Tibial artery (tissue), 4 donors: ENCODE measurements at regions of chr1 and their contacts with region 1.

Region 1: DNA sequence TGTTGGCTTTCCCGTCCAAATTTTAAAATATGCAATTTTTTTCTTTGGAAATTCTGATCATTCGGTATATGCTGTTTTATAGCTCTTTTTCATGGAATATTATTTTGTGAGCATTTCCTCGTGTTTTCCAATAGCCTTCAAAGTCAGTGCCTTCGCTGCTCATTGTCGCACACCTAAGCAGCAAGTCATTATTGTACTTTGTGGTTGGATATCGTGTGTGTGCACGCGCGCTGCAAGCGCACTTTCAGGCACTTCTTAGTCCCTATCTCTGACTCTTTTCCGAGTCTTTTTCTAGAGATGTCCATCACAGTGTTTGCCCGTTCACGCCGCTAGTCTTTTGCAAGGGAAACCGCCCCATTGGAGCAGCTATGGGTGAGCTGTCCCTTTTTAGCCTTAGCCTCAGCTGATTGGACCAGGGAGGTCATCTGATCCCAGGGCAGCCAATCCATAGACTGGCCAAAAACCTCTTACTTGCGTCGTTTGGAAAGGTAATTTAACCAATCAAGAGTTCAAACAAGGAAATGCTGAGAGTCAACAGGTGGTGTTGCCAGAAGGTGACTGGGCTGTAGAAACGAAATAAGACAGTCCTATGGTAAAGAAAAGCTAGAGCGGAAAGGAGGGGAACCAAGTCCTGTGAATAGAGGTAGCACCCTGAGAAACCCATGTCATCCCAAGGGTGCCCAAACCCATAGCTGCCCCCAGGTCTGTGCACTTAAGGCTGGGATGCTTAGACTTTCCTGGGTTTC is 708 bp upstream of the HYI start:
- DNase-seq: peak; percentile 70 to 86
- H3K4me3 ChIP-seq: peak overlapping the region; percentile 68 to 74
- H3K27ac ChIP-seq: peak overlapping the region; percentile 94 to 98
- H3K4me1 ChIP-seq: peaks cover 0 to 16% (median 10%) of the 10 kb centered on the region in 4 donors
- H3K27me3 ChIP-seq: no peaks in the 10 kb centered on the region
- CTCF ChIP-seq: peak in 1 of 2 experiments; percentile 20

Region 2: DNA sequence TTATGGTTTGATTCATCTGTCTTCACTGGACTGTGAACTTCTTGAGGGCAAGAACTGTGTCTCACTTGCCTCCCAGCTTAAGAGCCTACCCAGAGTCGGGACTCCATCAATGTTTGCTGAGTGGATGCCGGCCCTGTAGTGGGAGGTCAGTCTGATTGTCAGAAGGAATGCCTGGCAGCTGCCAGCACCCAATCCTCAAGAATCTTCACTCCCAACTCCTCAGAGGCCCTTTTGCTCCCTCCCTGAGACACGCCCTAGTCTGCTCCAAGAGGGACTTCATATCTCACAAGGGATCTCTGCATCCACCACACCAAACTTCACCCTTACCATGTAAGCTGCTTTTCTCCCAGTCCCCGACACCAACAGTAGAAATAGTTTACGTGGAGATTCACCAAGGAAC is 180.3 kb after region 1 on chr1:
- intact Hi-C with region 1: no loop called
- DNase-seq: no peak
- H3K4me3 ChIP-seq: no peak overlapping the region
- H3K27ac ChIP-seq: no peak overlapping the region
- H3K4me1 ChIP-seq: no peaks in the 10 kb centered on the region
- H3K27me3 ChIP-seq: peaks cover 0 to 5% of the 10 kb centered on the region in 2 donors
- CTCF ChIP-seq: no peak

Region 3: DNA sequence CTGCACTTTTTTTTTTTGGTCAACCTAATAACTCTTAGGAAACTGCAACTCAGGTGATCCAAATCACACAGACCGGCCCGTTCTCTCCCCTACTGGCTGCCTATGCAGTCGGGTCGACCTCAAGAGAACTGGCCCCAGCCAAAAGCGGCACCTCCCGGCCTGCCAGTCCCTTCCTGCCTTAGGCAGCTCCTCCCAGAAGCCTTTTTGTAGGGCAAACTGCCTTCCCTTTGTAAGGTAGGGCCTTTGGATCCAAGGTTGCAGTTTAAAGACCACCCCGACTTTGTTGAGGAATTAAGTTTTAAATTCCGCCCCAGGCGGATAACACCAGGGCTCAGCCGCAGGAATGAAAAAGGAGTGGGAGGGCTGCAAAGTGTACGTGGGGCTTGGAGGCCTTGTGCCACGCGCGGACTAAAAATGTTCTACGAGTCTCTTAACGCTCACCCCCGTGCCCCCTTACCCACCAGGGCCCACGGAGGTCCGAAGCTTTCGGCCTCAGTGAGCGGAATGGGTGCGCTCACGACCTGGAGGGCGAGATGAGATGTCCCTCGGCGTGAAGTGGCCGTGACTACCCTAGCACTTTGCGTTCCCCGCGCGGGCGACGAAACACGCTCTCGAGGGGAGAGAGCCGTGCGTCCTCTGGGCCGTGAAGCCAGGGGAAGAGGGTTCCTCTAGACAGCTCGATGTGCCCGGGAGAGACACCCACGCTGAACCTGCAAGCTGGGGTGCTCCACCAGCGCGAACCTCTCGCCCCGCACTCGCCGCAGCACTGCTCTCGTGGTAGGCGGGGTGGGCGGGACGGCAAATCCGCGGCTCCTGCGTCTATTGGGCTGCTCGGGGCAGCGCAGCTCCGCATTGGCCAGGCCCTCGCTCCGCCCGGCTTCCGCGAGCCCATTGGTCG is 252.4 kb after region 1 on chr1:
- intact Hi-C with region 1: loop called (anchors 5 kb)
- DNase-seq: peak; percentile 92 to 94
- H3K4me3 ChIP-seq: peak overlapping the region; percentile 87 to 89
- H3K27ac ChIP-seq: peak overlapping the region; percentile 79 to 81
- H3K4me1 ChIP-seq: peaks cover 0 to 20% (median 14%) of the 10 kb centered on the region in 4 donors
- H3K27me3 ChIP-seq: no peaks in the 10 kb centered on the region
- CTCF ChIP-seq: no peak